ENCODE measurements at regions of chr17 and their contacts with region 1.

Region 1: GRCh38 chr17:82551779-82552457 is 32.4 kb downstream of the FOXK2 start:
- DNase-seq: peak; percentile 91
- H3K4me3 ChIP-seq: peak overlapping the region; percentile 1
- H3K27ac ChIP-seq: peak overlapping the region; percentile 17
- H3K4me1 ChIP-seq: peaks cover 37% of the 10 kb centered on the region
- CTCF ChIP-seq: peak; percentile 99

Region 2: DNA sequence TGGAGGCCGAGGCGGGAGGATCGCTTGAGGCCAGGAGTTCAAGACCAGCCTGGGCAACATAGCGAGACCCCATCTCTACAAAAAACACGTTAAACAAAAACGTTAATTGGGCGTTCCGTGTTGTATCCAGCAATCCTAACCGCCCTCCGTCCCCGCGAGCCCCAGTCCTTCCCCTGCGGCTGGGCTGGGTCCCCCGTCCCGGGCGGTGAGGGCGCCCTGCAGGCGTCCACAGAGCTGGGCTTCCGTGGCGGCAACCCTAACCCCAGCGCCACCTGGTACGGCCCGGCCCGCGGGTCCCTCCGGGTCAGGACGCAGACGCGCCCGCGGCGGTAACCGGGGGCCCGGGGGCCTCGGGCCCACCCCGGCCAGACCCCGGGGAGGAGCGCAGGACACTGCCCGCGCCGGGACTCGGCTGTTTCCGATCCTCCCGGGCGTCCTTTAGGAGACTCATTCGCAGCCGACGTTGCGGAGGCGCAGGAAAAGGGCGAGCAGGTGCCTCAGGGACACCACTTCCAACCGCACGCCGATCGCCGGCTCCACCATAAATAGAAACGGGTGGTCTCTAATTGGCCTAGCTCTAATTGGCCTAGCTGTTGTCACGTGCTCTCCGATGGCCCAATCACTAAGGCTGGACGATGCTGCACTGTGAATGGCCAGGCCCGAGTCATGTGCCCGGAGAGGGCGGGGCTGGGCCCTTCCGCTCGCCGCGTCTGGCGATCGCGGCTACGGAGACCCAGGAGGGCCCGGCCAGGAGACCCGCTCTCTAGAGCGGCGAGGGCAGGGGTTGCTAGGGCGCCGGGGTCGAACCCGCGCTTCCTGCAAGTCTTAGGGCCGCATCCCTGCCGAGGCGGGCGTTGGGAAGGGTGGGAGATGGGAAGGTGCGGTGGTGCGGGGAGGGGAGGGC is 259.4 kb before region 1 on chr17:
- CTCF ChIA-PET with region 1: no interaction called
- POLR2A ChIA-PET with region 1: interaction called, 5 read pairs
- intact Hi-C with region 1: loop called (anchors 10 kb)
- DNase-seq: peak; percentile 100
- H3K4me3 ChIP-seq: peak overlapping the region; percentile 85
- H3K27ac ChIP-seq: peak overlapping the region; percentile 82
- H3K4me1 ChIP-seq: peaks cover 33% of the 10 kb centered on the region
- CTCF ChIP-seq: no peak; the same call in 1 of the 2 replicates

Region 3: DNA sequence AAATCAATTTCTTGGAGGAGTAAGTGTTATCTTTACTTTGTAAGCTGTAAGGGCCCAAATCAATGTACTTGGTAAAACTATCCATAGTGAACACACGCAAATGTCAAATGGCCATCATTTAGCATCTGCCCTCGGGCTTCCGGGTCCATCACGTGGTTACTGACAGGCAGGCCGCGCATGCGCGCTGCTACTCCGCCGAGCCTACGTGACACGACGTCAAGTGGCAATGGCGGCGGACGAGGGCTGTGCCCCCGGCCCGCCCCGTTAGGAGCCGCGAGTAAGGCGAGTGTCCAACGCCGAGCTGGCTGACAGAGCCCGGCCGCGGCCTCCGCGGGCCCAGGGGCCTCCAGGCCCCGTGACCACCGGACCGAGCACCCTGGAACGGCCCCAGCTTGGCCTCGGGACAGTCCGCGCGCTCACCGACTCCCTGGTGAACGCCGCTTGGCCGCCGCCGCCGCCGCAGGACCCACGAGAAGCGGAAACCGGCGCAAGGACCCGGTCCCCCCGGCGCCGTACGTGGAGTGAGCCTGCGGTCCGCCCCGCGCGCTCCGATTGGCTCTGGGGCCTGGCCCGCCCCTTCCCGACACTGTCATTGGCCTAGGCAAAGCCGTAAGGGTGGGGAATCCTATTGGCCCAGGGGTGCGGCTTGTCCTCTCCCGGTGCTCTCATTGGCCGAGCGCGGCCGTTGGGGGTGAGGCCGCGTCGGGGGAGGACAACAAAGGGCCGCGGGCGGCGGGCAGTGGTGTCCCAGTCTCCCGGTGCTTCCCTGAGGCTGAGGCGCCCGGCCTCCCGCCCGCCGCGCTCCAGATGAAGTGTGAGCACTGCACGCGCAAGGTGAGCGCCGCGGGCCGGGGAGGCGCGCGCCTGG is 93.7 kb before region 1 on chr17 and contains the start of gene NARF:
- CTCF ChIA-PET with region 1: interaction called, 3 read pairs
- POLR2A ChIA-PET with region 1: interaction called, 4 read pairs
- intact Hi-C with region 1: loop called (anchors 2 kb)
- DNase-seq: peak; percentile 100
- H3K4me3 ChIP-seq: peak within 1 kb of the TSS; percentile 75
- H3K27ac ChIP-seq: peak within 1 kb of the TSS; percentile 89
- H3K4me1 ChIP-seq: peaks cover 18% of the 10 kb centered on the region
- CTCF ChIP-seq: no peak
- total RNA-seq, gene NARF: 75.0 and 82.5 TPM in 2 replicates

Region 4: GRCh38 chr17:82494236-82495055 is 57.5 kb before region 1 on chr17:
- CTCF ChIA-PET with region 1: interaction called, 4 read pairs
- POLR2A ChIA-PET with region 1: interaction called, 5 read pairs
- intact Hi-C with region 1: loop called (anchors 1 kb)
- DNase-seq: peak; percentile 91
- H3K4me3 ChIP-seq: peak overlapping the region; percentile 38
- H3K27ac ChIP-seq: peak overlapping the region; percentile 54
- H3K4me1 ChIP-seq: peaks cover 68% of the 10 kb centered on the region
- CTCF ChIP-seq: peak; percentile 93

Region 5: DNA sequence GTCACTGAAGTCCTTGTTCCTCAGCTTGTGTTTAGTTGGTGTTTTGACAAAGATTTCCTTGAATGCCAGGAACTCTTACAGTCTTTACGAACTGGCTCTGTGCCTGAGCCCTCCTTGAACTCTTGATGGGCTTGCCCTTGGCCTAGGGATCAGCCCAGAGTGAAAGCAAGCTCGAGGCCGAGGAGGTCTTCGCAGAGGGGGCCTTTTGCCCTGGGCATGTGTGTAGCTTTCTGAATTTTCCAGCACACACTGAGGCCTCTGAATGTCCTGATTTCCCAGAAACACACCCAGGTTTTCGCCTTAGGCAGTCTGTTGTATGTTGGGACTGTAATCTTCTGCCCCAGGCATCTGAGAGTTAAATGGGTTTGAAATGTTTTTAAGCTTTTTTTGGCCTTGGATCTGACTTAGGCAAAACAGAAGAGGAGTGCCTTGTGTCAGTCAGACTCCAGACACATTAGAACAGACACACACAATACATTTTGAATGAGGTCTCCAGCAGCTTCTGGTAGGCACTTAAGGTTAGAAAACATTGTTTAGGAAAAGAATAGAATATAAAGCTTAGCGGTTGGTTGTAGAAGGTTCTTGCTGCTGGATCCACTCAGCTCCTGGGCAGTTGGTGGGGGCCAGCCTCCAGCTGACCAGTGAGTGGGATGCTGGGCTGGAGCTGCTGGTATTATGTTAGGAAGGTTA is 15.3 kb before region 1 on chr17:
- CTCF ChIA-PET with region 1: interaction called, 4 read pairs
- POLR2A ChIA-PET with region 1: interaction called, 13 read pairs
- intact Hi-C with region 1: no loop called
- DNase-seq: no peak
- H3K4me3 ChIP-seq: no peak overlapping the region
- H3K27ac ChIP-seq: peak overlapping the region; percentile 22
- H3K4me1 ChIP-seq: peaks cover 68% of the 10 kb centered on the region
- CTCF ChIP-seq: no peak

Region 6: GRCh38 chr17:82627405-82627804 is 75.5 kb after region 1 on chr17:
- CTCF ChIA-PET with region 1: no interaction called
- POLR2A ChIA-PET with region 1: no interaction called
- intact Hi-C with region 1: no loop called
- DNase-seq: no peak
- H3K4me3 ChIP-seq: no peak overlapping the region
- H3K27ac ChIP-seq: no peak overlapping the region
- H3K4me1 ChIP-seq: no peaks in the 10 kb centered on the region
- CTCF ChIP-seq: no peak

Region 7: DNA sequence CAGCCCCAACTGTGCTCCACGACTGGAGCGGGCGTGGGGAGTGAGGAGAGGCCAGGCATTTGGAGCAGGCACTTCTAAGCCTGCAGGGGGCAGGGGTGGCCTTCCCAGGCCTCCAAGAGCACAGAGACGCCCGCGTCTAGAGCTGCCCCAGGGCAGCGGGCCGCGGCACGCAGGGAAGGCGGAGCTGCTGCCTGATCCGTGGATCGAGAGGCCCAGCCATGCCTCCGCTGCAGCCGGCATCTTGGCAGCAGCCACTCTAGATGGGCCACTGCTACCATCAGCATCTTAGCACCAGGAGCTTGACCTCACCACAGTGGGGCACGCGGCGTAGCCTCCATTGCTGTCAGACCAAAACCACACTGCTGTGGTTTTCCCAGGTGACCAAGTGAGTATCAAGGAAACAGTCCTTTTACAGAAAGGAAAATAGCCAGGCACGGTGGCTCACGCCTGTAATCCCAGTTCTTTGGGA is 116.7 kb after region 1 on chr17:
- CTCF ChIA-PET with region 1: no interaction called
- POLR2A ChIA-PET with region 1: no interaction called
- intact Hi-C with region 1: no loop called
- DNase-seq: peak; percentile 73
- H3K4me3 ChIP-seq: no peak overlapping the region
- H3K27ac ChIP-seq: no peak overlapping the region
- H3K4me1 ChIP-seq: peaks cover 6% of the 10 kb centered on the region
- CTCF ChIP-seq: peak; percentile 80